Activated B cell treated with CpG ODN at 0.5 μM for 24 hours (primary cell): ENCODE measurements at regions of chr14 and their contacts with region 1.

Region 1: DNA sequence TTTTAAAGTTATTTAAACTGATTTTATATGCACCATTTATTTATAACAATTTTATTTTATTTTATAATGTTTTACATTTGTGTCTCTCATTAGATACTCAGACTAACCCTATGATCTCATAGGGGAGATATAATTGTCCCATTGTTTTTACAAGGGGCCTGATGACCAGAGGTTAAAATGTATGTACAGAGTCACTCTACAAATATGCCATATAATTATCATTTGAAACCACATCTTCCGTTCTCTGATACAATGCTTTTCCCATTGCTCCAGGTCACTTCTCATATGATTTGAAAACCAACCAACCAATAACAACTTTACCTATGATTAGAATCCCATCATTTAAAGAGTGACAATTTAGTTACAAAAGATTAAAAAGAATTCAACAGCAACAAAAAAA is 137.8 kb downstream of the GPHN start:
- DNase-seq: no peak
- ATAC-seq: no peak
- H3K4me3 Mint-ChIP-seq: no peak overlapping the region
- H3K27ac Mint-ChIP-seq: no peak overlapping the region
- H3K4me1 Mint-ChIP-seq: peaks cover 7% of the 10 kb centered on the region
- H3K27me3 Mint-ChIP-seq: no peaks in the 10 kb centered on the region
- CTCF ChIP-seq: no peak

Region 2: DNA sequence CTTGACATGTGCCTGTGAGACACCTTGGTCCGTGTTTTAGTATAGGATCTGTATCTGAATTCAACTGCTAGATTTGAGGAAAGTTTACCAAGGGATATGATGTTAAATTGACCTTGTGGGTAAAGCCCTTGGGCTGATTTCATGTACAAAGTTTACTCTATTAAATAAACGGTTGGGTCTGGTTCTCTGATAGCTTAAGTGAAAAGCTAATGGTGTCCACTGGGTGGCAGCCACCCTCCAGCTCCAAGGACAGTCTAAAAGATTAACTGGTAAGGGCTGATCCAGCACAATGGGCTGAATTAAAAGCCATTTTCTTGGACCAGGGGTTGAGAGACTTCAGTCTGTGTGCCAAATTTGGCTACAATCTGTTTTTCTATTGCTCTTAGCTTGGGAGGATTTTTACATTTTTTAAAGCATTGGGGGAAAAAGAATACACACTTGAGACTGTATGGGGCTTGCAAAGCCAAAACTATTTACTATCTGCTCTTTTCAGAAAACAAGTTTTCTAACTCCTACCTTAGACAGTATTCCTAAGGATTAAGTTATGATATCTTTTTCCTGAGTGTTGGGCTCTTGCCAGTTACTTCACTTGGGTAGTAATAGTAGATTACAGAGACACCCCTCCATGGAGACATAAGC is 21.3 kb before region 1 on chr14:
- CTCF ChIA-PET with region 1: no interaction called
- POLR2A ChIA-PET with region 1: no interaction called
- intact Hi-C with region 1: loop called (anchors 2 kb)
- DNase-seq: no peak
- ATAC-seq: peak; percentile 45
- H3K4me3 Mint-ChIP-seq: no peak overlapping the region
- H3K27ac Mint-ChIP-seq: no peak overlapping the region
- H3K4me1 Mint-ChIP-seq: no peaks in the 10 kb centered on the region
- H3K27me3 Mint-ChIP-seq: no peaks in the 10 kb centered on the region
- CTCF ChIP-seq: no peak